Endothelial cell of umbilical vein (primary cell): ENCODE measurements at regions of chr5 and their contacts with region 1.

Region 1: GRCh38 chr5:170183816-170184687 is 48.7 kb upstream of the C5orf58 start:
- DNase-seq: peak; percentile 65
- H3K4me3 ChIP-seq: no peak overlapping the region
- H3K27ac ChIP-seq: no peak overlapping the region
- H3K4me1 ChIP-seq: no peaks in the 10 kb centered on the region
- H3K27me3 ChIP-seq: no peaks in the 10 kb centered on the region
- CTCF ChIP-seq: peak; percentile 84 to 94
- POLR2A ChIP-seq: no peak

Region 2: DNA sequence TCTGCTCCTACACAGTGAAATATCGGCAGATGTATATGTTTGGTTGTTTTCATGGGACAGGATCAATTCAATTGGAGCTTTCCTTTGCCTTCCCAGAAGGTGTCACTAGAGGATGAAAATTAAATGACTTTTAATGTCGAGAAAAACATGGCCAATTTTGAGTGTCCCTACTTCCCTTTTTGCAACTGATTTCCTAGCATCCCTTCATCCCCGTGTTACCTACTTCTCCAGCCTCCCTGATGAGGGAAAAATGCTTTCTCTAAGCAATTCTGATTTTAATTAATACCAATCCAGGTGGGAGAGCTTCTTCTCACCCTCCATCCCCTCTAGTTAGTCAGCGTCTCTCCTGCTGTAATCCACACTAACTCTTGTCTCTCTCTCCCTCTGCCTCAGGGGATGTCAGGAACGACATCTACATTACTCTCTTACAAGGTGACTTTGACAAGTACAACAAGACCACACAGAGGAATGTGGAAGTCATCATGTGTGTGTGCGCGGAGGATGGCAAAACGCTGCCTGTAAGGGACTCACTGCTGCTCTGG is 482.1 kb before region 1 on chr5:
- CTCF ChIA-PET with region 1: interaction called, 6 read pairs
- POLR2A ChIA-PET with region 1: no interaction called
- dilution Hi-C with region 1: no loop called
- intact Hi-C with region 1: loop called (anchors 1 kb)
- DNase-seq: peak; percentile 45
- H3K4me3 ChIP-seq: no peak overlapping the region
- H3K27ac ChIP-seq: no peak overlapping the region
- H3K4me1 ChIP-seq: peaks cover 28% of the 10 kb centered on the region
- H3K27me3 ChIP-seq: no peaks in the 10 kb centered on the region
- CTCF ChIP-seq: peak; percentile 25 to 42
- POLR2A ChIP-seq: no peak

Region 3: DNA sequence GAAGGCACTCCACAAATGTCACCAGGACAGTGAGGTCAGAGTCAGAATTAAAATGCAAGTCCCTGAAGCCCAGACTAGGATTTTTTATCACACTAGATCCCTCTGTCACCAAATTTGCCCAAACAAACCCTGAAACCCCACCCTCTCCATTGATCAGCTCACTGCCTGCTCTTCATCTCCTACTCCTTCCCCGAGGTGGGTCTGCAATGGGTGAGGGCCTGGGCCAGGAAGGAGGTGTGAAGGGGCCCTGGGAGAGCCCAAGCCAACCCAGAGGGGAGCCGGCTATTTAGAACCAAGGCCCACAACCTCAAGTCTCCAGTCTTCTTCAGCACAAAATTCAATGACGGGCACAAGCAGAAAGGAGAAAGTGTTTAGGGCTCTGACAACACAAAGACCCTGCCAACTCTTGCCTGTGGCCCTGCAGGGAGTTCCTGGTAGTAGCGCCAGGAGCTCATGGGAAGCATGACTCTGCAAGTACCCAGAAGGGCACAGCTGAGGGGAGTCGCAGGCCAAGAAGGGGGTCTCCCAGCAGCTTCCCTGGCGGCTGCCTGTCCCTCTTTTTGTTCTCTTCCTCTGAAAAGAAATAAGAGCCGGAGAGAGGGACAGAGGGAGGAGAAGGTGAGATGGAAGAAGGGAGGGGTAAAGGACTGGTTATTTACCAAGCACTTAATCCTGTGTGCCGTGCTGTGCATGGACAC is 72.8 kb before region 1 on chr5:
- CTCF ChIA-PET with region 1: interaction called, 12 read pairs
- POLR2A ChIA-PET with region 1: no interaction called
- dilution Hi-C with region 1: no loop called
- intact Hi-C with region 1: no loop called
- DNase-seq: no peak
- H3K4me3 ChIP-seq: no peak overlapping the region
- H3K27ac ChIP-seq: no peak overlapping the region
- H3K4me1 ChIP-seq: no peaks in the 10 kb centered on the region
- H3K27me3 ChIP-seq: no peaks in the 10 kb centered on the region
- CTCF ChIP-seq: no peak
- POLR2A ChIP-seq: no peak

Region 4: GRCh38 chr5:170169996-170170395 is 14.1 kb before region 1 on chr5:
- CTCF ChIA-PET with region 1: interaction called, 14 read pairs
- POLR2A ChIA-PET with region 1: no interaction called
- dilution Hi-C with region 1: no loop called
- intact Hi-C with region 1: no loop called
- DNase-seq: no peak
- H3K4me3 ChIP-seq: no peak overlapping the region
- H3K27ac ChIP-seq: no peak overlapping the region
- H3K4me1 ChIP-seq: no peaks in the 10 kb centered on the region
- H3K27me3 ChIP-seq: no peaks in the 10 kb centered on the region
- CTCF ChIP-seq: no peak
- POLR2A ChIP-seq: no peak

Region 5: GRCh38 chr5:170206216-170206615 is 22.2 kb after region 1 on chr5:
- CTCF ChIA-PET with region 1: interaction called, 16 read pairs
- POLR2A ChIA-PET with region 1: no interaction called
- dilution Hi-C with region 1: no loop called
- intact Hi-C with region 1: no loop called
- DNase-seq: no peak
- H3K4me3 ChIP-seq: no peak overlapping the region
- H3K27ac ChIP-seq: no peak overlapping the region
- H3K4me1 ChIP-seq: no peaks in the 10 kb centered on the region
- H3K27me3 ChIP-seq: peaks cover 3% of the 10 kb centered on the region in 2 experiments
- CTCF ChIP-seq: no peak
- POLR2A ChIP-seq: no peak